ENCODE measurements at regions of chr3 and their contacts with region 1.

Region 1: DNA sequence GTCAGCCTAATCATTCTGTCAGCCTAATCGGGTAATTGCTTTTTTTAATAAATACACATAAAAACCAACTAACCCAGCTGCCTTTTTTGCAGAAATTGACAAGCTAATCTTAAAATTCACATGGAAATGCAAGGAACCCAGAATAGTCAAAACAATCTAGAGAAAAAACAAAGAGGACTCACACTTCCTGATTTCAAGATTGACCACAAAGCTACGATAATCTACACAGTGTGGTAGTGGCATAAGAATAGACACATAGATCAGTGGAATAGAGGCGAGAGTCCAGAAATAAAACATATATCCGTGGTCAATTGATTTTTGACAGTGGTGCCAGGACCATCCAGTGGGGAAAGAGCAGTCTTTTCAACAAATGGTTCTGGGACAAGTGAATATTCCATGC is 2.4 kb upstream of the C3orf20 start:
- DNase-seq: no peak
- ATAC-seq: no peak
- H3K4me3 ChIP-seq: no peak overlapping the region
- H3K27ac ChIP-seq: no peak overlapping the region
- H3K4me1 ChIP-seq: no peaks in the 10 kb centered on the region
- H3K27me3 ChIP-seq: no peaks in the 10 kb centered on the region
- CTCF ChIP-seq: no peak
- EP300 ChIP-seq: no peak
- POLR2A ChIP-seq: no peak
- RAD21 ChIP-seq: no peak

Region 2: DNA sequence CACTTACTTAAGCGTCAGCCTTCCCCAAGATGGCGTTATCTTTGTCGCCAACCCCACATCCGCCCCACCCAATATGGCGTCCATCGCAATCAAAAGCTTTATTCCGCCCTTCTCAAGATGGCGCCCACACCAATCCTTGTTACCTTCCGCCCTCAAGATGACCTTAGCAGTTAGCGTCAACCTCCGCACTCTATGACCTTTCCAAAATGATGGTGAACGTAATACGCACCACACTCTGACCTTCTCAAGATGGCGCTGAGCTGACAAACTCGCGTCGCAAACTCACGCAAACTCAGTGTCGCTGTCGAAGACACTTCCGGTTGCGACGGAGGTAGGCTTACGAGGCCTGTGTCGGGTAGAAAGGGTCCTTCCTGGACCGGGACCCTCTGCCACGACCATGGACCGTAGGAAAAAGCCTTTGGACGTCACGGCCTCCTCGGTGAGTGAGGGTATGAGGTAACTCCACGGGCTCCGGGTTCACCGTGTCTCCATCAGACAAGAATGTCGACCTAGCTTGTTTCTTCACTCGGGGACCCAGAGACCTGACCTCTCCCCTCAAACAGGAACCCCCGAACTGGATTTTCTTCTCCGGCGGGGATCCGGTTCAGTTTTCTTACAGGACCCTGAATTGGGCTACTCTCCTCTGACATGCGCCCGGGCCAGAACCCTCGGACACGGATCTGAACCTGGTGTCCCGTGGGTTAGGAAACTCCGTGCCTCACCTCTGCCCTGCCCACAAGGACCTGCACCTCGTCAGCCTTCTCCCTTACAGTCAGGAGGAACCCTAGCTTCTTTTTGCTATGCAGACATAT is 20.9 kb before region 1 on chr3 and contains the start of gene CCDC174:
- CTCF ChIA-PET with region 1: no interaction called
- POLR2A ChIA-PET with region 1: interaction called, 22 read pairs
- in situ Hi-C with region 1: no loop called
- intact Hi-C with region 1: no loop called
- DNase-seq: peak; percentile 93 to 100 (median 94)
- ATAC-seq: peak; percentile 92
- H3K4me3 ChIP-seq: peak within 1 kb of the TSS; percentile 54
- H3K27ac ChIP-seq: peak within 1 kb of the TSS; percentile 91
- H3K4me1 ChIP-seq: peaks cover 14 to 28% of the 10 kb centered on the region in 2 experiments; a peak in 4 of 5 replicates
- H3K27me3 ChIP-seq: no peaks in the 10 kb centered on the region
- CTCF ChIP-seq: peak in 1 of 3 experiments; percentile 48; a peak in 2 of 6 replicates
- EP300 ChIP-seq: peak; percentile 44; the same call in 1 of the 2 replicates
- POLR2A ChIP-seq: peak; percentile 96
- RAD21 ChIP-seq: 0 out of 4 replicates have a peak, but pooled peaks of 1 of the 2 experiments have one; percentile 6
- polyA plus RNA-seq, gene CCDC174: 34.9 to 41.0 TPM

Measured in K562 (cell line).